Panc1 (cell line): ENCODE measurements at regions of chr19 and their contacts with region 1.

Region 1: DNA sequence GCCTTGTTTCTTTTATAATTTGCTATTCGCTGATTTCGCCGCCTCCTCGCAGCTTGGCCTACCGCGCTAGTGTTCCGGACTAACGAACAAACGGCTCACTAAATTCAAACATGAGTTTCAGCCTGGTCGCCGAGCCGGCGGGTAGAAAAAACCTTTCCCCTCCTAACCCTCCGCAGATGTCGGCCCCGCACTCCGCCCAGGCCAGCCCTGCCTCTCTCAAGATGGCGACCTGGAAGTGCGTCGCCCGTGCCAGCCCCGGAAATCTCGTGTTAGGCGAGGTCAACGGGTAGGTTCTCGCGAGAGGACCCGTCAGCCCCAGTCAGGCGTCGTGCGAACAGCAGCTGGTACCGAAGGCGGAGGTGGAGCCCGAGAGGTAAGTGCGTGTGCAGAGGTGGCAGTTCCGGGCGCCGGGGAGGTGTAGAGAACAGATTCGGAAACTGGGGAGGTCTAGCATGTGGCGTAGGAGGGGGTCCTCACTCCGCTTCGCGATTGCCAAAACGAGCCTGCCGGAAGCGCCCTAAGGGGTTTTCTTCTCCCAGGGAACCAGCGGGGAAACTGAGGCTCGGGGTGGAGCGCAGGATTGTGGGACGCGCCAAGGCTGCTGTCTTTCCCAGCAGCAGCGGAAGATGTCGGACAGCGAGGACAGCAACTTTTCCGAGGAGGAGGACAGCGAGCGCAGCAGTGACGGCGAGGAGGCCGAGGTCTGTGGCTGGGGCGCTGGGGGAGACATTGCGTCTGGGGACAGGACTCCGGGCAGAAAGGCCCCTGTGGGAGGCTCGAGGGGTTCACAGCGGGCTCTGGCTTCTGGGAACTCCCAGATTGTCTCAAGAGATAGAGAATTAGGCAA is at the start of gene SUPT5H:
- DNase-seq: peak; percentile 100
- ATAC-seq: peak; percentile 94
- H3K4me3 ChIP-seq: peak within 1 kb of the TSS; percentile 34 to 56
- H3K27ac ChIP-seq: peak within 1 kb of the TSS; percentile 85
- H3K4me1 ChIP-seq: peaks cover 32% of the 10 kb centered on the region
- H3K27me3 ChIP-seq: no peaks in the 10 kb centered on the region
- CTCF ChIP-seq: no peak
- total RNA-seq, gene SUPT5H: 1,614 TPM

Region 2: DNA sequence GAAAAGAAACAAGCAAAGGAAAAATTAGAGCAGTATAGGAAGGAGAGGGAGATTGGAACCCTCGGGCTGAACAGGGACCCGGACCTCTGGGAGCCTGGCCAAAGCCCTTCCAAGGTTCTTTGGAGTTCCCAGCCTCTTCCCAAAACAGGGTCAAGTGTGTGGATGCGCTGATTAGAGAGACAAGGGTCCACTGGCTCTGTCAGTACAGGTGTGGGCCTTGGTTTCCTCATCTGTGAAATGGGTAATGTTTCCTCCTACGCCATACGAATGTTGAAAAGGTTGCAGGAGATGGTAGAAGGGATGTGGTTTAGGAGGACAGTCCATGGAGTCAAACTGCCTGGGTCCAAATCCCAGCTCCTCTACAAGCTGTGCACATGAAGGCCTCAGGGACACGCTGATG is 239.4 kb before region 1 on chr19:
- CTCF ChIA-PET with region 1: no interaction called
- POLR2A ChIA-PET with region 1: no interaction called
- in situ Hi-C with region 1: no loop called
- intact Hi-C with region 1: no loop called
- DNase-seq: no peak
- ATAC-seq: no peak
- H3K4me3 ChIP-seq: no peak overlapping the region
- H3K27ac ChIP-seq: no peak overlapping the region
- H3K4me1 ChIP-seq: peaks cover 5% of the 10 kb centered on the region
- H3K27me3 ChIP-seq: peaks cover 3% of the 10 kb centered on the region; the same call in 1 of the 2 replicates
- CTCF ChIP-seq: no peak

Region 3: GRCh38 chr19:39397360-39398296 is 47.9 kb before region 1 on chr19:
- CTCF ChIA-PET with region 1: interaction called, 22 read pairs
- POLR2A ChIA-PET with region 1: interaction called, 10 read pairs
- in situ Hi-C with region 1: no loop called
- intact Hi-C with region 1: no loop called
- DNase-seq: peak; percentile 100
- ATAC-seq: peak; percentile 78
- H3K4me3 ChIP-seq: no peak overlapping the region
- H3K27ac ChIP-seq: peak overlapping the region; percentile 75
- H3K4me1 ChIP-seq: peaks cover 51% of the 10 kb centered on the region
- H3K27me3 ChIP-seq: no peaks in the 10 kb centered on the region
- CTCF ChIP-seq: no peak

Region 4: DNA sequence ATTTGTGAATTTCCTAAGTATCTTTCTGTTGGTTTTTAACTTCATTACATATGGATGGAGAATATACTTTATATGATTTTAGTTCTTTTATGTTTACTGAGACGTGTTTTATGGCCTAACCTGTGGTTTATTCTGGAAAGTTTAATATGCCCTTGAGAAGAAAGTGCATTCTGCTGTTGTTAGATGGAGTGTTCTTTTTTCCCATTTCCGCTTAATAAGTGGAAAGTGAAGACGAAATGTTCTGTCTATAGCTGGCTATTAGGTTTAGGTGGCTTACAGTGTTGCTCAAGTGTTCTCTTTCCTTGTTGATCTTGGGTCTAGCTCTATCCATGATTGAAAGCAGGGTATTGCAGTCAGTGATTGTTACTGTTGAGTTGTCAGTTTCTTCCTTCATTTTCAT is 17.9 kb after region 1 on chr19:
- CTCF ChIA-PET with region 1: interaction called, 20 read pairs
- POLR2A ChIA-PET with region 1: interaction called, 12 read pairs
- in situ Hi-C with region 1: no loop called
- intact Hi-C with region 1: no loop called
- DNase-seq: no peak
- ATAC-seq: no peak
- H3K4me3 ChIP-seq: no peak overlapping the region
- H3K27ac ChIP-seq: no peak overlapping the region
- H3K4me1 ChIP-seq: no peaks in the 10 kb centered on the region
- H3K27me3 ChIP-seq: no peaks in the 10 kb centered on the region
- CTCF ChIP-seq: no peak

Region 5: DNA sequence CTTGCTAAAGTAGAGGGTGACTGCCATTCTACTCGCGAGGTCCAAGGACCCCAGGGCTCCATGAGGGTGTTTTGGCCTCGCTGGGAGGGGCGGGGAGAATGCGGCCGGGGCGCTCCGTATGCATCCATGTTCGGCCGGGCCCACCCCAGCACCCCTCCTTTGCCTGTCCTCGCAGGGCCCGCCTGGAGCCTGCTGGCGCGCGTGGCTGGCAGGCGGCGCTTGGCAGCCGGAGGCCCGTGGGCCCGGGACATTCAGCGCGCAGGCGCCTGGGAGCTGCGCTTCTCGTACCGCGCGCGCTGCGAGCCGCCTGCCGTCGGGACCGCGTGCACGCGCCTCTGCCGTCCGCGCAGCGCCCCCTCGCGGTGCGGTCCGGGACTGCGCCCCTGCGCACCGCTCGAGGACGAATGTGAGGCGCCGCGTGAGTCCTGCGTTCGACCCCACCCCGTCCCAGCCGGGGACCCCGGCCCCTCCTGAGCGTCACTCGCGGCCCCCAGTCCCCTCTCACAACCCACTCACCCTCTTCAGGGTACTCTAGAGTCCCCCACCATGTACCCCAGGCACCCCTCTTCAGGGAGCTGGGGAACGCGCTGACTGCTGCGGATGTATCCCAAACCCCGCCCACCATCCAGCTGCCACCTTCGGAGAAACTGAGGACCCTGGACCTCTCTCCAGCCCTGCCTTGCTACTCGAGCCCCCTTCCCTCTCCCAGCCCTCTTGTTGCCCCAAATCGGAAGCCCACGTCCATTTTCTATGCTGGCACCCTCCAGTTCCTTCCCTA is 57.3 kb after region 1 on chr19:
- CTCF ChIA-PET with region 1: interaction called, 104 read pairs
- POLR2A ChIA-PET with region 1: interaction called, 21 read pairs
- in situ Hi-C with region 1: loop called (anchors 5 kb)
- intact Hi-C with region 1: loop called (anchors 2 kb)
- DNase-seq: peak; percentile 93
- ATAC-seq: peak; percentile 24
- H3K4me3 ChIP-seq: peak overlapping the region in 1 of 2 experiments; percentile 34; a peak in 2 of 4 replicates
- H3K27ac ChIP-seq: peak overlapping the region; percentile 3; the same call in 1 of the 2 replicates
- H3K4me1 ChIP-seq: peaks cover 27% of the 10 kb centered on the region
- H3K27me3 ChIP-seq: peaks cover 8% of the 10 kb centered on the region
- CTCF ChIP-seq: no peak

Region 6: GRCh38 chr19:39539519-39540332 is 94.2 kb after region 1 on chr19 and contains the start of gene EID2:
- CTCF ChIA-PET with region 1: interaction called, 193 read pairs
- POLR2A ChIA-PET with region 1: interaction called, 45 read pairs
- in situ Hi-C with region 1: no loop called
- intact Hi-C with region 1: loop called (anchors 1 kb)
- DNase-seq: peak; percentile 100
- ATAC-seq: peak; percentile 97
- H3K4me3 ChIP-seq: peak within 1 kb of the TSS; percentile 36 to 59
- H3K27ac ChIP-seq: peak within 1 kb of the TSS; percentile 78
- H3K4me1 ChIP-seq: peaks cover 26% of the 10 kb centered on the region
- H3K27me3 ChIP-seq: peaks cover 11% of the 10 kb centered on the region
- CTCF ChIP-seq: no peak
- total RNA-seq, gene EID2: 163 TPM

Region 7: DNA sequence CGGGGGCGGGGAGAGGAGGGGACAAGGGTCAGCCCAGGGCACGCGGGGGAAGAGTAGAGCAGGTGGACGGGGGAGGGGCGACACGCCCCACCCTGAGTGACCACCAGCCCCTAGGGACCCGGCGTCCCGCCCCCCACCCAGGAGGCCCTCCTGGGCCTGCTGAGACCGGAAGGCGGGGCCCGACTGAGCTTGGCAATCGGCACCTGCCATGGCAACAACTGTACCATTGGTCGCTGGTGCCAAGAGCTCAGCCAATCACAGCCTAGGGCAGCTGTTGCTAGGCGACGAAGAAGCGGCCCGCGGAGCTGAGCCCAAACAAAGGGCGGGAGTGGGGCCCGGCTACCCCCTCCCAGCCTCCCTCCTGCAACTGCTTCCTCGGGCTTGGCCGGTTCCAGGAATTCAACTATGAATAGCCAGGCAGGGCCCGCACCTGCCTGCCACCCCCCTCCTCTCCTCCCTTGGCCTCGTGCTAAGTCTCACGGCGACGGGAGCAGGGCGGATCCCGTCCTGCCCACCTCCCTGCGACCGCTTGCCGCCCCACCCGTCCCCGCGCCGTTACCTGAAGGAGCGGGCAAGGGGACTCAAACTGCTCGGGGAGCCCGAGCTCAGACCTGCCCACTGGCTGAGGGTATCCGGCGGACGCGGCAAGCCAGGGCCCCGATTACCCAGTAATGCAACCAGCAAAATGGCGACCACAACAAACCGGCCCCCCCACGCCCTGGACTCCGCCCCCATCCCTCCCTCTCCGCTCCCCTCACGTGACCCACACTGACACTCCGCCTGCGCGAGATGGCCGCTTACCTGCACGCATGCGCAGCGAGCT is 388.2 kb after region 1 on chr19 and contains the start of gene DYRK1B:
- CTCF ChIA-PET with region 1: interaction called, 6 read pairs
- POLR2A ChIA-PET with region 1: interaction called, 24 read pairs
- in situ Hi-C with region 1: no loop called
- intact Hi-C with region 1: no loop called
- DNase-seq: peak; percentile 100
- ATAC-seq: peak; percentile 94
- H3K4me3 ChIP-seq: peak within 1 kb of the TSS; percentile 36 to 57
- H3K27ac ChIP-seq: peak within 1 kb of the TSS; percentile 76
- H3K4me1 ChIP-seq: peaks cover 26% of the 10 kb centered on the region
- H3K27me3 ChIP-seq: no peaks in the 10 kb centered on the region
- CTCF ChIP-seq: no peak
- total RNA-seq, gene DYRK1B: 322 TPM